Naive thymus-derived CD4-positive, alpha-beta T cell (primary cell): ENCODE measurements at regions of chr7 and their contacts with region 1.

Region 1: GRCh38 chr7:100428967-100429636 is 529 bp upstream of the MEPCE start:
- DNase-seq: peak; percentile 100
- ATAC-seq: peak; percentile 76
- H3K4me3 ChIP-seq: peak overlapping the region; percentile 88
- H3K4me3 Mint-ChIP-seq: peak overlapping the region; percentile 93 to 100 (median 97)
- H3K27ac ChIP-seq: peak overlapping the region; percentile 97
- H3K27ac Mint-ChIP-seq: peak overlapping the region; percentile 99 to 100 (median 100)
- H3K4me1 ChIP-seq: peaks cover 22 to 29% of the 10 kb centered on the region in 2 donors
- H3K4me1 Mint-ChIP-seq: peaks cover 22 to 56% (median 42%) of the 10 kb centered on the region in 7 donors
- H3K27me3 ChIP-seq: no peaks in the 10 kb centered on the region
- H3K27me3 Mint-ChIP-seq: peaks cover 0 to 24% (median 0%) of the 10 kb centered on the region in 5 donors

Region 2: DNA sequence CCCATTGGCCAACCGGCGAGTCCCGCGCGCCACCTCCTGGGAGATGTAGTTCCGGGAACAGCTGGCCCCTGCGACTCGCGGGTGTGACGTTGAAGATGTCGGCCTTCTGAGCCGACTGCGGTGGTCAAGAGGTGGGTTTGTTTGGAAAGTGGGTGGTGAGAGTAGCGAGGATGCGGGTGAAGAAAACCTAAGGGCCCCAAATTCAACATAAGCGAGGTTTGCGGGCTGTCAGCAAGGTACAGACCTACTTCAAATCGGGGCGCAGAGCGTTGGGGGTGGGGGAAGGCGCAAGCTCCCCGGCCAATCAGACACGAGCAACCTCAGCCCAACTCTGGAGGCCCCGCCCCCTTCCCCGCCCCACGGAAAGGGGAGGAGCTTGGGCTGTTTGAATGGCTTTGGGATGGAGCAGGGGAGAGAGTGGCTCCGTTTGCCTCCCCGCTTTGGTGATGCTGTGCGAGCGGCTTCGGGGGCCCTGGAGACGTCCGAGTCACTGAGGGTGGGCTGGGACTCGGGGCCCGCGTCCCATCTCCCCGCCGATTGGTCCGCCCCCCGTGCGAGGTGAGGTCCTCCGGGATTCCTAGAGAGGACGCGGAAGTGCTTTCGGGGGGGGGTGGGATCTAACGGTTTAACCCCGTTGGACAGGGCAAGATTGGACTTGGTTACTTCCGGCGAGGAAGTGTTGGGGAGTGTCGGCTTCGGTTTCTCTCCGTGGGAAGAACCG is 924.3 kb before region 1 on chr7 and contains the start of gene ZKSCAN5:
- CTCF ChIA-PET with region 1: no interaction called
- POLR2A ChIA-PET with region 1: interaction called, 3 read pairs
- intact Hi-C with region 1: loop called in 1 of 2 experiments (anchors 2 kb)
- DNase-seq: peak; percentile 93 to 98 (median 97)
- ATAC-seq: peak; percentile 93
- H3K4me3 ChIP-seq: peak within 1 kb of the TSS; percentile 98
- H3K4me3 Mint-ChIP-seq: peak within 1 kb of the TSS; percentile 84 to 100 (median 96)
- H3K27ac ChIP-seq: peak within 1 kb of the TSS; percentile 88
- H3K27ac Mint-ChIP-seq: peak within 1 kb of the TSS; percentile 68 to 99 (median 97)
- H3K4me1 ChIP-seq: peaks cover 13 to 27% of the 10 kb centered on the region in 2 donors
- H3K4me1 Mint-ChIP-seq: peaks cover 20 to 41% (median 30%) of the 10 kb centered on the region in 7 donors
- H3K27me3 ChIP-seq: no peaks in the 10 kb centered on the region
- H3K27me3 Mint-ChIP-seq: no peaks in the 10 kb centered on the region
- total RNA-seq, gene ZKSCAN5: 4.7 to 11.0 (median 8.3) TPM

Region 3: GRCh38 chr7:99729501-99730237 is 699.4 kb before region 1 on chr7:
- CTCF ChIA-PET with region 1: no interaction called
- POLR2A ChIA-PET with region 1: no interaction called
- intact Hi-C with region 1: no loop called
- DNase-seq: no peak
- ATAC-seq: no peak
- H3K4me3 ChIP-seq: no peak overlapping the region
- H3K4me3 Mint-ChIP-seq: no peak overlapping the region
- H3K27ac ChIP-seq: no peak overlapping the region
- H3K27ac Mint-ChIP-seq: no peak overlapping the region
- H3K4me1 ChIP-seq: no peaks in the 10 kb centered on the region
- H3K4me1 Mint-ChIP-seq: no peaks in the 10 kb centered on the region
- H3K27me3 ChIP-seq: no peaks in the 10 kb centered on the region
- H3K27me3 Mint-ChIP-seq: no peaks in the 10 kb centered on the region

Region 4: DNA sequence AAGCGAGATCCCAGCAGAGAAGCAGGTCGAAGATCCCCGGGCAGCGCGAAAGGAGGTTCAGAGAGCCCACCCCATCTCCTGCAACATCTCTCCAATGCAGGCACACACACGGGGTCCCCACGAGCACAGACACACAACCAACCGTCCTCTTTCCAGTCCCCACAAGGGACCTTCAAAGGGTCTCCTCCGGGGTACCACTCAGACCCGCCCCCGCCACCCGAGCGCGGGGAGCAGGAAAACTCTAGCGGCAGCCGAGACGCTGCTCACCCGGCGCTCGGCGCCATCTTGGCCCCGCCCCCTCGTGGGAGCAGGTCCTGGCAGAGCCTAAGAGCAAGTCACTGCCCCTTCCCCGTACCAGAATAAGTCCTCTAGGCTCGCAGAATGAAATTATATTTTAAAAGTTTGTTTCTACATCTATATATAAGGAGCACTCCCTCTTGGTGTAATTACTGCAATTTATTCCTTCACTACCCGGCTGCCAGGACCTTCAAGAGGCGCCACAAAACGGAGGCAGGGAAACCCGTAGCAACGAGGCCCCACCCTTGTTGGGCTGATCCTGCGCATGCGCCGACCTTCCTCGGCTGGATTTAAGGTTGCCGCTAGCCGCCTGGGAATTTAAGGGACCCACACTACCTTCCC is 309.9 kb before region 1 on chr7 and contains the starts of genes CNPY4 and TAF6:
- CTCF ChIA-PET with region 1: no interaction called
- POLR2A ChIA-PET with region 1: interaction called, 8 read pairs
- intact Hi-C with region 1: loop called (anchors 1 to 2 kb)
- DNase-seq: peak; percentile 88 to 97 (median 95)
- ATAC-seq: peak; percentile 88
- H3K4me3 ChIP-seq: peak within 1 kb of the TSS; percentile 100
- H3K4me3 Mint-ChIP-seq: peak within 1 kb of the TSS; percentile 90 to 100 (median 98)
- H3K27ac ChIP-seq: peak within 1 kb of the TSS; percentile 88
- H3K27ac Mint-ChIP-seq: peak within 1 kb of the TSS; percentile 97 to 99 (median 98)
- H3K4me1 ChIP-seq: peaks cover 12 to 19% of the 10 kb centered on the region in 2 donors
- H3K4me1 Mint-ChIP-seq: peaks cover 18 to 34% (median 28%) of the 10 kb centered on the region in 7 donors
- H3K27me3 ChIP-seq: no peaks in the 10 kb centered on the region
- H3K27me3 Mint-ChIP-seq: no peaks in the 10 kb centered on the region
- total RNA-seq, gene CNPY4: 22.1 to 68.2 (median 40.3) TPM
- total RNA-seq, gene TAF6: 39.5 to 68.1 (median 55.0) TPM

Region 5: GRCh38 chr7:100342765-100343164 is 86.3 kb before region 1 on chr7:
- CTCF ChIA-PET with region 1: no interaction called
- POLR2A ChIA-PET with region 1: interaction called, 3 read pairs
- intact Hi-C with region 1: loop called in 1 of 2 experiments (anchors 1 kb)
- DNase-seq: no peak
- ATAC-seq: no peak
- H3K4me3 ChIP-seq: no peak overlapping the region
- H3K4me3 Mint-ChIP-seq: no peak overlapping the region
- H3K27ac ChIP-seq: peak overlapping the region; percentile 38
- H3K27ac Mint-ChIP-seq: peak overlapping the region; percentile 49 to 90 (median 73)
- H3K4me1 ChIP-seq: peaks cover 4 to 9% of the 10 kb centered on the region in 2 donors
- H3K4me1 Mint-ChIP-seq: peaks cover 6 to 46% (median 34%) of the 10 kb centered on the region in 7 donors
- H3K27me3 ChIP-seq: no peaks in the 10 kb centered on the region
- H3K27me3 Mint-ChIP-seq: no peaks in the 10 kb centered on the region

Region 6: GRCh38 chr7:100545360-100546128 is 116.4 kb after region 1 on chr7:
- CTCF ChIA-PET with region 1: no interaction called
- POLR2A ChIA-PET with region 1: interaction called, 12 read pairs
- intact Hi-C with region 1: no loop called
- DNase-seq: peak in 2 of 9 donors; percentile 34 to 60
- ATAC-seq: peak; percentile 55
- H3K4me3 ChIP-seq: peak overlapping the region; percentile 7
- H3K4me3 Mint-ChIP-seq: peak overlapping the region; percentile 45 to 82 (median 68)
- H3K27ac ChIP-seq: peak overlapping the region; percentile 56
- H3K27ac Mint-ChIP-seq: peak overlapping the region; percentile 77 to 95 (median 88)
- H3K4me1 ChIP-seq: peaks cover 69 to 91% of the 10 kb centered on the region in 2 donors
- H3K4me1 Mint-ChIP-seq: peaks cover 74 to 100% (median 92%) of the 10 kb centered on the region in 7 donors
- H3K27me3 ChIP-seq: no peaks in the 10 kb centered on the region
- H3K27me3 Mint-ChIP-seq: no peaks in the 10 kb centered on the region

Region 7: DNA sequence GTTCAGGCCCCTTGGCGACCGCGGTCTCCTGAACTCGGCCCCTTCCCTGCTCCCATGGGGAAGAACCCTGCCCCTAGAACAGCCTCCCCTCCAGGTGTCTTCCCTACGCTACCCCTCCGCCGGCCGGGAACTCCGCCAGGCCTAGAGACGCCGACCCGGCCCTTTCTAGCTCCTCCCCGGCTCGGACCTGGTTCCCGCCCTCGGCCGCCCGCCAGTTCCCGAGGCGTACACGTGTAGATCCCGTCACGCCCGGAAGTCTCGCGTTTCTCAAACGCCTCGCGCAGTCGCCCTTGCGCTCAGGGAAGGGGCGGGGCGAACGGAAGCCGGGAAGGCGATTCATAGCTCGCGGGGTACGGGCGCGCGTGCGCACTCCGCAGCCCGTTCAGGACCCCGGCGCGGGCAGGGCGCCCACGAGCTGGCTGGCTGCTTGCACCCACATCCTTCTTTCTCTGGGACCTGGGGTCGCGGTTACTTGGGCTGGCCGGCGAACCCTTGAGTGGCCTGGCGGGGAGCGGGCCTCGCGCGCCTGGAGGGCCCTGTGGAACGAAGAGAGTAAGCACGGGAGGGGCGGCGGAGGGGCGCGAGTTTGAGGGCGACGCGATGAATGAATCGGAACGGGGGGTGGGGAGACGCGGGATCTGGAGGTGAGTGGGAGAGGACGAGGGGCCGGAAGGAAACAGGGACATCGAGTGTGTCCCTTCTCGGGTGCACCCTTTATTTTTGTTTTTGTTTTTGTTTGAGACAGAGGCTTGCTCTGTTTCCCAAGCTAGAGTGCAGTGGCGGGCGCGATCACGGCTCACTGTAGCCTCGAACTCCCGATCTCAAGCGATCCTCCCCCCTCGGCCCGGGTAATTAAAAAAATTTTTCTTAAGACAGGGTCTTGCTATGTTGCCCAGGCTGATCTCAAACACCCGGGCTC is 276.9 kb after region 1 on chr7 and contains the start of gene POP7:
- CTCF ChIA-PET with region 1: no interaction called
- POLR2A ChIA-PET with region 1: interaction called, 17 read pairs
- intact Hi-C with region 1: loop called (anchors 1 to 2 kb)
- DNase-seq: peak; percentile 95 to 99 (median 97)
- ATAC-seq: peak; percentile 97
- H3K4me3 ChIP-seq: peak within 1 kb of the TSS; percentile 85
- H3K4me3 Mint-ChIP-seq: peak within 1 kb of the TSS; percentile 88 to 97 (median 95)
- H3K27ac ChIP-seq: peak within 1 kb of the TSS; percentile 91
- H3K27ac Mint-ChIP-seq: peak within 1 kb of the TSS; percentile 88 to 96 (median 93)
- H3K4me1 ChIP-seq: peaks cover 9 to 12% of the 10 kb centered on the region in 2 donors
- H3K4me1 Mint-ChIP-seq: peaks cover 8 to 15% (median 13%) of the 10 kb centered on the region in 7 donors
- H3K27me3 ChIP-seq: no peaks in the 10 kb centered on the region
- H3K27me3 Mint-ChIP-seq: peaks cover 0 to 13% (median 3%) of the 10 kb centered on the region in 5 donors
- total RNA-seq, gene POP7: 8.9 to 38.2 (median 15.0) TPM

Region 8: GRCh38 chr7:101244375-101245146 is 815.5 kb after region 1 on chr7 and contains the start of gene FIS1:
- CTCF ChIA-PET with region 1: no interaction called
- POLR2A ChIA-PET with region 1: no interaction called
- intact Hi-C with region 1: loop called in 1 of 2 experiments (anchors 10 kb)
- DNase-seq: peak; percentile 87 to 96 (median 94)
- ATAC-seq: peak; percentile 96
- H3K4me3 ChIP-seq: peak within 1 kb of the TSS; percentile 100
- H3K4me3 Mint-ChIP-seq: peak within 1 kb of the TSS; percentile 88 to 100 (median 98)
- H3K27ac ChIP-seq: peak within 1 kb of the TSS; percentile 93
- H3K27ac Mint-ChIP-seq: peak within 1 kb of the TSS; percentile 93 to 100 (median 97)
- H3K4me1 ChIP-seq: peaks cover 14 to 16% of the 10 kb centered on the region in 2 donors
- H3K4me1 Mint-ChIP-seq: peaks cover 16 to 45% (median 35%) of the 10 kb centered on the region in 7 donors
- H3K27me3 ChIP-seq: no peaks in the 10 kb centered on the region
- H3K27me3 Mint-ChIP-seq: no peaks in the 10 kb centered on the region
- total RNA-seq, gene FIS1: 79.8 to 121 (median 107) TPM